ENCODE measurements at regions of chr4 and their contacts with region 1.

Region 1: DNA sequence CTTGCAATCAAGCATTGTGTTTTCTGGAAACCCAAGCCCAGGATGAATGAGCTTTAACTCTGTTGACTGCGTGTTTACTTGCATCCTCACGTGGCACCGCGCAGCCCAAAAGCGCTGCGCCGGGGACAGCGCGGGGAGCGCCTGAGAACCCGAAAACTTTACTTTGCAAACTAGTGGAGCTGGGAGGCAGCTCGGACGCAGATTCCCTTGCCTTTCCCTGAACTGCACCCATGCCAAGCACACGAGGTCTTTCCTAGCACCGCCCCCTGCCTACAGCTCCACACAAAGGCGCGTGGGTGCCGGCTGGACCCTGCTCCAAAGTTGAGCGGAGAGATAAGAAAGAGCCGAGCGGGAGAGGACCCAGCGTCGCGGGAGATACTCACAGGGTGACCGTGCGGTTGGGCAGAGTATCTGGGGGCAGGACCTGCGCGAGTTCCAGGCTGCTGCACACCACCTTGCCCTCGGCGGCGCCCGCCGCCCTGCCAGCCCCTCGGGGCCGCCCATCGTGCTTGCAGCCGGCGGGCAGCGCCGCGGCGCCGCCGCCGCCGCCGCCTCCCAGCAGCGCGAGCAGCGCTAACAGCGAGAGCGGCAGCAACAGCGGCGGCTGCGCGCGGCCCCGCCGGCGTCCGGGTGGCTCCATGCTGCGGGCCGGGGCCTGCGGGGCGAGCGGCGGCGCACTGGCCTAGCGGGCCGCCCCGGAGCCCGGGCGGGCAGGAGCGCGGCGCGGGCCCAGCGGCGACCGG is 550 bp downstream of the ADGRA3 start:
- DNase-seq: peak; percentile 83
- H3K4me3 Mint-ChIP-seq: peak overlapping the region; percentile 100
- H3K27ac Mint-ChIP-seq: peak overlapping the region; percentile 96
- H3K4me1 Mint-ChIP-seq: peaks cover 21% of the 10 kb centered on the region
- H3K27me3 Mint-ChIP-seq: peaks cover 7% of the 10 kb centered on the region

Region 2: GRCh38 chr4:22444813-22445212 is 70.5 kb before region 1 on chr4:
- intact Hi-C with region 1: loop called (anchors 1 kb)
- DNase-seq: no peak
- H3K4me3 Mint-ChIP-seq: peak overlapping the region; percentile 84
- H3K27ac Mint-ChIP-seq: peak overlapping the region; percentile 98
- H3K4me1 Mint-ChIP-seq: peaks cover 24% of the 10 kb centered on the region
- H3K27me3 Mint-ChIP-seq: no peaks in the 10 kb centered on the region

Region 3: DNA sequence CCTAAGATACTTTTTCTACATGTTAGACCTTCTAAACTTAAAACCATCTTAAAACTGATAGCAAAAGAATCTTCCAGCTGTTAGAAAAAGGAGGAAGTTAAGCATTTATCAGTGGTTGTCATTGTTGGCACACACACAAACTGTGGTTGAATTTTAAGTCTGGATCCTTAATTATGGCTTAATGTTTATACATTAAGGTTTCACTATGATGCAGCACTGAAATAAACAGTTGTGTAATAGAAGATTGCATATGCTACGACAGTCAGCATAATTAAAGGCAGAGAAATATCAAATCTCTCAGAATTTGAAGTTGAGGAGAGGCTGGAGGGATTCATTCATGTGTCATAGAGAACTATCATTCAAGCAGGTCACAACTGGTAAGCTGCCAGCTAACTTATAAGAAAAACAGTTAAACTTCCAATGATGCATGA is 31.8 kb before region 1 on chr4:
- intact Hi-C with region 1: loop called (anchors 5 kb)
- DNase-seq: no peak
- H3K4me3 Mint-ChIP-seq: no peak overlapping the region
- H3K27ac Mint-ChIP-seq: no peak overlapping the region
- H3K4me1 Mint-ChIP-seq: peaks cover 20% of the 10 kb centered on the region
- H3K27me3 Mint-ChIP-seq: no peaks in the 10 kb centered on the region

Region 4: GRCh38 chr4:22556495-22556894 is 41.2 kb after region 1 on chr4:
- intact Hi-C with region 1: no loop called
- DNase-seq: no peak
- H3K4me3 Mint-ChIP-seq: no peak overlapping the region
- H3K27ac Mint-ChIP-seq: no peak overlapping the region
- H3K4me1 Mint-ChIP-seq: no peaks in the 10 kb centered on the region
- H3K27me3 Mint-ChIP-seq: no peaks in the 10 kb centered on the region

Region 5: GRCh38 chr4:23368081-23368697 is 852.9 kb after region 1 on chr4:
- intact Hi-C with region 1: no loop called
- DNase-seq: no peak
- H3K4me3 Mint-ChIP-seq: no peak overlapping the region
- H3K27ac Mint-ChIP-seq: no peak overlapping the region
- H3K4me1 Mint-ChIP-seq: no peaks in the 10 kb centered on the region
- H3K27me3 Mint-ChIP-seq: no peaks in the 10 kb centered on the region

Measured in activated CD4-positive, alpha-beta T cell treated with anti-CD3 and anti-CD28 coated beads, Interleukin-2, amount 10 ng/mL, durations not matched to agents 24 days and 14 days (primary cell).